HepG2 (cell line): ENCODE measurements at regions of chr12 and their contacts with region 1.

Region 1: GRCh38 chr12:65169320-65170208 is at the start of gene LEMD3:
- DNase-seq: peak; percentile 90
- ATAC-seq: peak; percentile 94
- H3K4me3 ChIP-seq: peak within 1 kb of the TSS; percentile 92 to 97 (median 94)
- H3K27ac ChIP-seq: peak within 1 kb of the TSS; percentile 88
- H3K4me1 ChIP-seq: peaks cover 35% of the 10 kb centered on the region
- H3K27me3 ChIP-seq: no peaks in the 10 kb centered on the region; a peak in 1 of 5 replicates
- CTCF ChIP-seq: no peak
- EP300 ChIP-seq: no peak
- POLR2A ChIP-seq: peak; percentile 88 to 90
- RAD21 ChIP-seq: 0 out of 2 replicates have a peak, but pooled peaks have one; percentile 39
- total RNA-seq, gene LEMD3: 12.3 and 18.7 TPM in 2 replicates

Region 2: DNA sequence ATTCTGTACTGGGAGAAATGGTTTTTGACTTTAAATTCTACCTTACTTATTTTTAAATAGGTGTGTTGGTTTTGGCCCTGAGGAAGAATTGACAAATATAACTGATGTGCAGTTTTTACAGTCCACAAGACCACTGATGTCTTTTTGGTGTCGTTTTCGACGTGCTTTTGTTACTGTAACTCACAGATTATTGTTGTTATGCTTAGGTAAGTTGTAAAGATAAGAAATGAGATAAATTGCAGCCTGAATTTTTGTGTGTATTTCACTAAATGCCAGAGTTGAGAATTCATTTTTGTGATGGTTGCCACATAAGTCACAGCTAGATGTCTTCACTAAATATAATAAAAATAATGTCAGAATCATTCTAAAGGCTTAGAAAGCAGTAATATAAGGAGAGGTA is 69.0 kb after region 1 on chr12:
- CTCF ChIA-PET with region 1: no interaction called
- POLR2A ChIA-PET with region 1: no interaction called
- in situ Hi-C with region 1: no loop called
- intact Hi-C with region 1: loop called (anchors 5 kb)
- DNase-seq: no peak
- ATAC-seq: no peak
- H3K4me3 ChIP-seq: no peak overlapping the region
- H3K27ac ChIP-seq: no peak overlapping the region
- H3K4me1 ChIP-seq: no peaks in the 10 kb centered on the region
- H3K27me3 ChIP-seq: no peaks in the 10 kb centered on the region
- CTCF ChIP-seq: no peak
- EP300 ChIP-seq: no peak
- POLR2A ChIP-seq: no peak
- RAD21 ChIP-seq: no peak